ENCODE measurements at regions of chr3 and their contacts with region 1.

Region 1: DNA sequence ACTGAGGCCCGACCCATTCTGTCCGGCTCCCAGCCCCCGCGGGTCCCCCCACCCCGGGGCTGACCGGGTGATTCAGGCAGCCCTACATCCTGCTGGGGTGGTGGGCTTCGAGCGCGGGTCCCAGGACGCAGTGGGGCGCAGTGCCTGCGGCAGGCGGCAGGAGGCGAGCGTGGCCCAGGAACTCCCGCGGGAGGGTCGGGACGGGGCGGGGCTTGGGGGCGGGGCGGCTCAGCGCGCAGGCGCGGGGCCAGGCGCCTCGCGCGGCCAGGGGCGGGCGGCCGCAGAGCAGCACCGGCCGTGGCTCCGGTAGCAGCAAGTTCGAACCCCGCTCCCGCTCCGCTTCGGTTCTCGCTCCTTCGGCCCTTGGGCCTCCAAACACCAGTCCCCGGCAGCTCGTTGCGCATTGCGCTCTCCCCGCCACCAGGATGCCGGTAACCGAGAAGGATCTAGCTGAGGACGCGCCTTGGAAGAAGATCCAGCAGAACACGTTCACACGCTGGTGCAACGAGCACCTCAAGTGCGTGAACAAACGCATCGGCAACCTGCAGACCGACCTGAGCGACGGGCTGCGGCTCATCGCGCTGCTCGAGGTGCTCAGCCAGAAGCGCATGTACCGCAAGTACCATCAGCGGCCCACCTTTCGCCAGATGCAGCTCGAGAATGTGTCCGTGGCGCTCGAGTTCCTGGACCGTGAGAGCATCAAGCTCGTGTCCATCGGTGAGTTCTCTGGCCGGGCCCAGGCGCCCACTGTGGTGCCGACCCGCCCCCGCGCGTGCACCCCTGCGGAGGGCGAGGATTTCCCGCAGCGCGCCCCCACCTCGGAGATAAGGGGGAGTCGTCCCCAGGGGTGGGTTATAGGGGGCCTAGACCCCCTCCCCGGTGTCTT is at the start of gene FLNB:
- DNase-seq: peak; percentile 80
- ATAC-seq: peak; percentile 87
- H3K4me3 Mint-ChIP-seq: peak within 1 kb of the TSS; percentile 94
- H3K27ac Mint-ChIP-seq: peak within 1 kb of the TSS; percentile 84
- H3K4me1 Mint-ChIP-seq: peaks cover 24% of the 10 kb centered on the region
- H3K27me3 Mint-ChIP-seq: no peaks in the 10 kb centered on the region
- total RNA-seq, gene FLNB: 9.8 to 13.2 TPM

Region 2: GRCh38 chr3:58020783-58021071 is 12.3 kb after region 1 on chr3:
- CTCF ChIA-PET with region 1: interaction called, 11 read pairs
- DNase-seq: no peak
- ATAC-seq: no peak
- H3K4me3 Mint-ChIP-seq: no peak overlapping the region
- H3K27ac Mint-ChIP-seq: no peak overlapping the region
- H3K4me1 Mint-ChIP-seq: peaks cover 27% of the 10 kb centered on the region
- H3K27me3 Mint-ChIP-seq: peaks cover 3% of the 10 kb centered on the region

Region 3: DNA sequence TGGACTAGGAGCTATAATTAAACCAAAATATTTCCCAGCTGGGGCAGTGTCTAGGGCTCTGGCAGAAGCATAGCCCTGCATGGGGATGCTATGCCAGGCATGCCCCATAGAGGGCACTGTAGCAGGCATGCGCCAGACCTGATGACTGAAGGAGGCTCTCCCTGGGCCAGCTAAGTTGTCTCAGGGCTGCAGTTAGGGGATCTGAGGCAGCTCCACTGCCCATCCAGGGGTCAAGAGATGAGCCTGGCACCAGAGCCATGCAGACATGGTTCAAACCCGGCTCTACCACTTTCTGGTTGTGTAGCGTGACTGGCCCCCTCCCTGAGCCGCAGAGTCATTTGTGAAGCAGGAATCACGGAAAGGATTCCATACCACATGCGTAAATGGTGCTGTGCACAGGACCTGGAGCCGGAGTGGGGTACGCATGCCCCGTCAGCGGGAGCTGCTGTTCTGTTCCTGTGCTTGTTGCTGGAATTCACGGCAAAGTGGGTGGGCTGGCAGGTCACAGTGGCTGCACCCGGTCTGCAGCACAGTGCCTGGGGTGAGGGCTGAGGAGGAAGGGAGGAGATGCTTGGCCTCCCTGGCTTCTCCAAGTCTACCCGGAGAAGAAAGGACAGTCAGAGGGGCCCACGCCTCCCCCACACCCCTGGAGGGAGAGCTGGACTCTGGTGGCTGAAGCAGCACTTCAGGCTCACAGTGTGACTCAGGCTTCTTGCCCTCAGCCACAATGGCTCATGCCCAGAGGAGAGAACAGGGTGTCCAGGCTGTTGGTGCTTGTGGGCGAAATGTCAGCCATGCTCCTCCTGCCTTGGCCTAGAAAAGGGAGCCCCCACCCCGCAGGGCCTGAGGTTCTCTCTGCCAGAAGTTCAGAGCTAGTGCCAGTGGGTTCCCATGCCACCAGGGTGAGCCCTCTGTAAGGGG is 159.3 kb after region 1 on chr3:
- CTCF ChIA-PET with region 1: interaction called, 23 read pairs
- DNase-seq: peak; percentile 73
- ATAC-seq: peak; percentile 91
- H3K4me3 Mint-ChIP-seq: no peak overlapping the region
- H3K27ac Mint-ChIP-seq: no peak overlapping the region
- H3K4me1 Mint-ChIP-seq: no peaks in the 10 kb centered on the region
- H3K27me3 Mint-ChIP-seq: no peaks in the 10 kb centered on the region

Region 4: GRCh38 chr3:58177747-58178527 is 169.6 kb after region 1 on chr3:
- CTCF ChIA-PET with region 1: interaction called, 22 read pairs
- DNase-seq: peak; percentile 91
- ATAC-seq: peak; percentile 94
- H3K4me3 Mint-ChIP-seq: peak overlapping the region; percentile 62
- H3K27ac Mint-ChIP-seq: no peak overlapping the region
- H3K4me1 Mint-ChIP-seq: peaks cover 21% of the 10 kb centered on the region
- H3K27me3 Mint-ChIP-seq: peaks cover 6% of the 10 kb centered on the region

Region 5: DNA sequence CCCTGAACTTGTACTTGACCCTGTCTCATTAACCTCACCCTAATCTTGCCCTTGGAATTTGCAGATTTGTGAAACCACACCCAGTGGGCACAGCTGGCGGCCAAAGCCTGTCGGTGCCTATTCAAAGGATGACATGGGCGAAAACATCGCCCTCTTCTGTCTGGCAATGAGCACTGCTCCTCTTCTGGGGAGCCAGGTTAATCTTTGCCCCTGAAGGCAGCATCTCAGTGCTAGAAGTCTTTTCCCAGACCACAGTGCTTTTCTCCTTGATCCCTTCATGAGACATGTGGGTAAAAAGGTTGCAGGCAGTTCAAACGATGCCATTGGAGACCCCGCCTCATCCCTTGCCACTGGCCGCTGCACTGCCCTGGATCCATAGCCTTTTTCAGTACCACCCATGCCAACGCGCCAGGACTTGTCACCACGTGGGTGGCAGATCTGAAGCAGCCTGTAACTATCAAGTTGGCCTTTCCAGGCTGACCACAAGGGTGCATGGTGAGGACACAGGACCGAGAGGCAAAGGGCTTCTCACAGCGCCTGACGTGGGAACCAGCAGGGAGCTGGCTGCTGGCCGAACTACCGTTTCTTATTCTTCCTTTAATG is 208.9 kb after region 1 on chr3:
- CTCF ChIA-PET with region 1: interaction called, 23 read pairs
- DNase-seq: peak; percentile 65
- ATAC-seq: peak; percentile 81
- H3K4me3 Mint-ChIP-seq: no peak overlapping the region
- H3K27ac Mint-ChIP-seq: no peak overlapping the region
- H3K4me1 Mint-ChIP-seq: peaks cover 31% of the 10 kb centered on the region
- H3K27me3 Mint-ChIP-seq: peaks cover 4% of the 10 kb centered on the region

Measured in activated CD8-positive, alpha-beta memory T cell treated with anti-CD3 and anti-CD28 coated beads, Interleukin-2, amount 10 ng/mL, durations not matched to agents 7 days and 5 days (primary cell).